CD4-positive, alpha-beta memory T cell (primary cell): ENCODE measurements at regions of chr5 and their contacts with region 1.

Region 1: DNA sequence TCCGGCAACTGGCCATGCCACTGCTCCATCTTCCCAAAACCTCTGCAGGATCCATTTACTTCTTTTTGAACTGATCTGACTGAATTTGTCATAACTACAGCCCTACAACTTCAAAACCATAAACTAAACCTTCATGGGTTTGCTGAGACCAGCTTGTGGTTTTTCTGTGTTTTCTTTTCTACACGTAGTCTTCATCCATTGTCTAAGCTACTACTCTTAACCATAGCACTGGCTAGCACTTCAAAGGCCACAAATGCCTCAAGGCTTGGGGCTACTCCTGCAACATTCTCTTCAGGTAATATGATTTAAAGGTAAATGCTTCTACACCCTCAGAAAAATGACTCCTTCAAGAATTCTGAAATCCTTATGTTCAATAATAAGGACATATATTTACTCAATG is 9.0 kb upstream of the KIF2A start:
- DNase-seq: no peak
- H3K4me3 ChIP-seq: no peak overlapping the region
- H3K4me3 Mint-ChIP-seq: peak overlapping the region in 7 of 8 donors; percentile 49 to 80 (median 74)
- H3K27ac ChIP-seq: no peak overlapping the region
- H3K27ac Mint-ChIP-seq: peak overlapping the region; percentile 52 to 90 (median 77)
- H3K4me1 ChIP-seq: peaks cover 63% of the 10 kb centered on the region
- H3K4me1 Mint-ChIP-seq: peaks cover 40 to 81% (median 61%) of the 10 kb centered on the region in 4 donors
- H3K27me3 ChIP-seq: no peaks in the 10 kb centered on the region
- H3K27me3 Mint-ChIP-seq: no peaks in the 10 kb centered on the region

Region 2: GRCh38 chr5:62214701-62215100 is 82.3 kb before region 1 on chr5:
- CTCF ChIA-PET with region 1: no interaction called
- POLR2A ChIA-PET with region 1: no interaction called
- intact Hi-C with region 1: no loop called
- DNase-seq: no peak
- H3K4me3 ChIP-seq: no peak overlapping the region
- H3K4me3 Mint-ChIP-seq: no peak overlapping the region
- H3K27ac ChIP-seq: no peak overlapping the region
- H3K27ac Mint-ChIP-seq: no peak overlapping the region
- H3K4me1 ChIP-seq: no peaks in the 10 kb centered on the region
- H3K4me1 Mint-ChIP-seq: no peaks in the 10 kb centered on the region
- H3K27me3 ChIP-seq: no peaks in the 10 kb centered on the region
- H3K27me3 Mint-ChIP-seq: peaks cover 17 to 19% of the 10 kb centered on the region in 2 donors

Region 3: GRCh38 chr5:62340392-62340791 is 43.4 kb after region 1 on chr5:
- CTCF ChIA-PET with region 1: interaction called, 23 read pairs
- POLR2A ChIA-PET with region 1: interaction called, 5 read pairs
- intact Hi-C with region 1: loop called (anchors 1 kb)
- DNase-seq: peak in 4 of 5 donors; percentile 18 to 39 (median 30)
- H3K4me3 ChIP-seq: no peak overlapping the region
- H3K4me3 Mint-ChIP-seq: peak overlapping the region in 1 of 8 donors; percentile 1
- H3K27ac ChIP-seq: no peak overlapping the region
- H3K27ac Mint-ChIP-seq: peak overlapping the region in 6 of 7 donors; percentile 7 to 44 (median 24)
- H3K4me1 ChIP-seq: peaks cover 47% of the 10 kb centered on the region
- H3K4me1 Mint-ChIP-seq: peaks cover 43 to 79% (median 59%) of the 10 kb centered on the region in 4 donors
- H3K27me3 ChIP-seq: no peaks in the 10 kb centered on the region
- H3K27me3 Mint-ChIP-seq: no peaks in the 10 kb centered on the region

Region 4: GRCh38 chr5:62348723-62349481 is 51.9 kb after region 1 on chr5:
- CTCF ChIA-PET with region 1: interaction called, 55 read pairs
- POLR2A ChIA-PET with region 1: interaction called, 5 read pairs
- intact Hi-C with region 1: loop called (anchors 1 kb)
- DNase-seq: no peak
- H3K4me3 ChIP-seq: no peak overlapping the region
- H3K4me3 Mint-ChIP-seq: peak overlapping the region in 1 of 8 donors; percentile 8
- H3K27ac ChIP-seq: no peak overlapping the region
- H3K27ac Mint-ChIP-seq: peak overlapping the region in 6 of 7 donors; percentile 39 to 92 (median 66)
- H3K4me1 ChIP-seq: peaks cover 33% of the 10 kb centered on the region
- H3K4me1 Mint-ChIP-seq: peaks cover 13 to 27% (median 18%) of the 10 kb centered on the region in 4 donors
- H3K27me3 ChIP-seq: no peaks in the 10 kb centered on the region
- H3K27me3 Mint-ChIP-seq: no peaks in the 10 kb centered on the region

Region 5: GRCh38 chr5:62354028-62354874 is 57.2 kb after region 1 on chr5:
- CTCF ChIA-PET with region 1: interaction called, 55 read pairs
- POLR2A ChIA-PET with region 1: interaction called, 5 read pairs
- intact Hi-C with region 1: loop called (anchors 1 kb)
- DNase-seq: peak in 4 of 5 donors; percentile 46 to 52 (median 50)
- H3K4me3 ChIP-seq: no peak overlapping the region
- H3K4me3 Mint-ChIP-seq: no peak overlapping the region
- H3K27ac ChIP-seq: no peak overlapping the region
- H3K27ac Mint-ChIP-seq: peak overlapping the region in 5 of 7 donors; percentile 26 to 73 (median 38)
- H3K4me1 ChIP-seq: peaks cover 7% of the 10 kb centered on the region
- H3K4me1 Mint-ChIP-seq: peaks cover 2 to 5% (median 4%) of the 10 kb centered on the region in 4 donors
- H3K27me3 ChIP-seq: no peaks in the 10 kb centered on the region
- H3K27me3 Mint-ChIP-seq: no peaks in the 10 kb centered on the region